ENCODE measurements at regions of chr15 and their contacts with region 1.

Region 1: GRCh38 chr15:40590667-40591050 is 3.4 kb upstream of the KNL1 start:
- DNase-seq: no peak
- H3K4me3 ChIP-seq: no peak overlapping the region
- H3K27ac ChIP-seq: no peak overlapping the region
- H3K4me1 ChIP-seq: peaks cover 0 to 2% (median 0%) of the 10 kb centered on the region in 4 experiments; a peak in 1 of 7 replicates
- H3K27me3 ChIP-seq: no peaks in the 10 kb centered on the region
- CTCF ChIP-seq: no peak
- EP300 ChIP-seq: no peak
- POLR2A ChIP-seq: no peak
- RAD21 ChIP-seq: no peak

Region 2: DNA sequence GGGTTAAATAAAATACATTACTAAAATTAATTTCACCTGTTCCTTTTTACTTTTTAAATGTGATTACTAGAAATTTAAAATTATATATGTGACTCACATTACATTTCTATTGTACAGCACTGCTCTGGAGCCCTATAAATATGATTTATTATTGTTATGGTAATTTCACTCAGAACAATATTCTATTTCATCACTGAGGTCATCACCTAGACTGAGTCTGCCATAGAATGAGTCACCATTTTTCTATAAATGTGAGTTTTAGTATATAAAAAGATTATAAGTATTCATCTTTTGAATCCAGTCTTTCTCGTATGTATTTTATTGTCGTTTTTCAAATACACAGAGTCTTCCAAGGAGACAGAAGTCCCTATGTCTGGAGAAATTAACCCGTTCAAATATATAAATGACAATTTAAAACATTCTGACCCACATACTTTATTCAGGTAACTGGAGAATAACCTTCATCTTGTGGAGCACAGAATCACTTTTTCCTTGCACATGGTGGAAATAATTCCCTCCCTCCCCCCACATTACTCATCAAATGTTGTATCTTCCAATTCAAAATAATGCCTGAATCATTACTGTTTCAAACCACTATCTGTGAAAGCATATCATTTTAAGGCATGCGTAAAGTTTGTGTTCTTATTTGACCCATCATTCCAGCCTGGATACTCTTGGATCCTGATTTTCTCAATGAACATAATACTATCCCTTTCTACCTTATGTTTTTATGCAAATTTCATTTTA is 89.9 kb before region 1 on chr15:
- CTCF ChIA-PET with region 1: no interaction called
- POLR2A ChIA-PET with region 1: no interaction called
- DNase-seq: no peak
- H3K4me3 ChIP-seq: no peak overlapping the region
- H3K27ac ChIP-seq: no peak overlapping the region
- H3K4me1 ChIP-seq: no peaks in the 10 kb centered on the region
- H3K27me3 ChIP-seq: no peaks in the 10 kb centered on the region; a peak in 1 of 7 replicates
- CTCF ChIP-seq: no peak
- EP300 ChIP-seq: no peak
- POLR2A ChIP-seq: no peak
- RAD21 ChIP-seq: no peak

Region 3: DNA sequence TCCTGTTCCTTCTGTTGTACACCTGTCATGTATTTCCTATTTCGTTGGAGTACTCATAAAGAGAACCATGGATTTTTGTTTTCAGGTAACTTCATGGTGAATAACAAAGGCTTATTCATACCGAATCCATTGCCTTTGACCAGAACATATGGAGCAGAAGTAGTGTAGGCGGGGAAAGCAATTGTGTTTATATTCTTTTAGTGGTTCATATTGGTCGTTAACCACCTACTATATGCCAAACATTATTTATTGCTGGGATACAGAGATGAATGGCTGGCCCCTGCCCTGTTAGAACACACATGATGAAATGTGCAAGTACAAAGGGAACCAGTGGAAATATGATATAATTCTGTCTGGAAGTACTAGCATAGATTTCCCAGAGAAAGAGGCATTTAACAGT is 11.8 kb before region 1 on chr15:
- CTCF ChIA-PET with region 1: interaction called, 13 read pairs
- POLR2A ChIA-PET with region 1: interaction called, 3 read pairs
- DNase-seq: no peak
- H3K4me3 ChIP-seq: no peak overlapping the region
- H3K27ac ChIP-seq: no peak overlapping the region
- H3K4me1 ChIP-seq: no peaks in the 10 kb centered on the region
- H3K27me3 ChIP-seq: no peaks in the 10 kb centered on the region
- CTCF ChIP-seq: no peak
- EP300 ChIP-seq: no peak
- POLR2A ChIP-seq: no peak
- RAD21 ChIP-seq: no peak

Region 4: GRCh38 chr15:40603928-40604327 is 13.3 kb after region 1 on chr15:
- CTCF ChIA-PET with region 1: interaction called, 42 read pairs
- POLR2A ChIA-PET with region 1: interaction called, 5 read pairs
- DNase-seq: no peak
- H3K4me3 ChIP-seq: no peak overlapping the region
- H3K27ac ChIP-seq: no peak overlapping the region
- H3K4me1 ChIP-seq: no peaks in the 10 kb centered on the region
- H3K27me3 ChIP-seq: no peaks in the 10 kb centered on the region
- CTCF ChIP-seq: no peak
- EP300 ChIP-seq: no peak
- POLR2A ChIP-seq: no peak
- RAD21 ChIP-seq: no peak

Region 5: DNA sequence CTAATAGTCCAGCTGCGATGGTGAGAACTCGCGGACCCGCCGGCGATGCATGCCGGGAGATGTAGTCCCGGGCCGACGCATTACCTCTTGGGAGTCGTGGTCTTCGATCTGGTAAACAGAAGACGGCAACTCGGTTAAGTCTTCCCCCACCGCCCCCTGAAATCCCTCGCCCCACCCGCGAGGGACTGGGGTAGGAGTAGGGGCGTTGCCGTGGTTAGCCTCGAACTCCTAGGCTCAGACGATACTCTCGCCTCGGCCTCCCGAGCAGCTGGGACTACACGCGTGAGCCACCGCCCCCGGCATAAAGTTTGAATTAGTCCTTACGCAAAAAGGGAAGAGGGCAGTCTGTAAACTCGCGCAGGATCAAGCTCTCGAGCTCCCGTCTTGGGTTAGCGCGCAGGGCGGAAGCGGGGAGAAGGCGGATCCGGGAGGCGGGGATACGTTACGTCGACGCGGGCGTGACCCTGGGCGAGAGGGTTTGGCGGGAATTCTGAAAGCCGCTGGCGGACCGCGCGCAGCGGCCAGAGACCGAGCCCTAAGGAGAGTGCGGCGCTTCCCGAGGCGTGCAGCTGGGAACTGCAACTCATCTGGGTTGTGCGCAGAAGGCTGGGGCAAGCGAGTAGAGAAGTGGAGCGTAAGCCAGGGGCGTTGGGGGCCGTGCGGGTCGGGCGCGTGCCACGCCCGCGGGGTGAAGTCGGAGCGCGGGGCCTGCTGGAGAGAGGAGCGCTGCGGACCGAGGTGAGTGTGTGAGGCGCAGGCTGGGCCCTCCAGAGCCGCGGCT is 104.2 kb after region 1 on chr15 and contains the start of gene RAD51:
- CTCF ChIA-PET with region 1: interaction called, 11 read pairs
- POLR2A ChIA-PET with region 1: interaction called, 6 read pairs
- DNase-seq: peak; percentile 70 to 92
- H3K4me3 ChIP-seq: peak within 1 kb of the TSS; percentile 57 to 96 (median 86)
- H3K27ac ChIP-seq: peak within 1 kb of the TSS; percentile 96
- H3K4me1 ChIP-seq: peaks cover 0 to 3% (median 1%) of the 10 kb centered on the region in 4 experiments; a peak in 1 of 7 replicates
- H3K27me3 ChIP-seq: no peaks in the 10 kb centered on the region
- CTCF ChIP-seq: no peak
- EP300 ChIP-seq: no peak
- POLR2A ChIP-seq: peak; percentile 90
- RAD21 ChIP-seq: no peak
- total RNA-seq, gene RAD51: 41.6 and 42.4 TPM in 2 replicates

Region 6: GRCh38 chr15:40793216-40793989 is 202.7 kb after region 1 on chr15:
- CTCF ChIA-PET with region 1: no interaction called
- POLR2A ChIA-PET with region 1: no interaction called
- DNase-seq: no peak
- H3K4me3 ChIP-seq: no peak overlapping the region
- H3K27ac ChIP-seq: no peak overlapping the region
- H3K4me1 ChIP-seq: peaks cover 4 to 13% (median 8%) of the 10 kb centered on the region in 4 experiments
- H3K27me3 ChIP-seq: no peaks in the 10 kb centered on the region
- CTCF ChIP-seq: no peak
- EP300 ChIP-seq: no peak
- POLR2A ChIP-seq: no peak
- RAD21 ChIP-seq: no peak